ENCODE measurements at regions of chr1 and their contacts with region 1.

Region 1: DNA sequence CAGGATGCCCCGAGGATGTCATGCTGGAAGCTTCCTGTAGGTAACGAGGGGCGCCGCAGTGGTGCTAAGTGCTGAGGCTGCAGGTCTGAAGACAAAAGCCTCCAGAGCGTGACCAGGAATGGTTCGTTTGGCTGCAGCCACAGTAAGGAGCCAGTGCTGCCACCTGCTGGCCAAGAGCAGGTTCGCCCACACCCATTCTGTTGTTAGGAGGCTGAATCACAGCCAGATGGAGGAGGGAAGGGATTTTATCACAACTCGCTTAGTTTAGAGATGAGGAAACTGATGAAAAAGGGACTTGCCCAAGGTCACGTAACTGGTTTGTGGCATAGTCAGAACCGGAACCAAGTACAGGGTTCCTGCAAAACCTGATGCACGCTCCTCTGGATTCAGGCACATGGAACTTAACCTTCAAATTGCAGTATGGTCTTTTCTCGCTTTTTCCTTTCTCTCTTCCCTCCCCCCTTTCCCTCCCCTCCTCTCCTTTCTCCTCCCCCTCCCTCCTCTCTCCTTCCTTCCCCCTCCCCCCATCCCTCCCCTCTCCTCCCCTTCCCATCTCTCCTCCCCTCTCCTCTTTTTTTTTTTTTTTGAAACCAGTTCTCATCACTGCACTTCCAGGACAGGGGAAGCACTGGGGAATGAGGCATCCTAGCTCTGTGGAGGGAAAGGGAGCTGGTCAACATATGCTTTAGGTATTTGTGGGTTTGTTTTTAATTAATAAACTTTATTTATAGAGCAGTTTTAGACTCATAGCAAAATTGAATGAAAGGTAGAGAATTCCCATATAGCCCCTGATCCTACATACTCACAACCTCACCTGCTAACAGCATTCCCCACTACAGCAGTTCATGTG is 81.8 kb downstream of the MPZL1 start:
- DNase-seq: peak; percentile 95
- ATAC-seq: peak; percentile 89
- H3K4me3 ChIP-seq: no peak overlapping the region
- H3K27ac ChIP-seq: no peak overlapping the region
- H3K4me1 ChIP-seq: peaks cover 9% of the 10 kb centered on the region
- H3K27me3 ChIP-seq: no peaks in the 10 kb centered on the region
- CTCF ChIP-seq: peak; percentile 98
- POLR2A ChIP-seq: no peak
- RAD21 ChIP-seq: peak; percentile 89

Region 2: GRCh38 chr1:167553136-167554027 is 250.2 kb before region 1 on chr1 and contains the start of gene CREG1:
- CTCF ChIA-PET with region 1: no interaction called
- POLR2A ChIA-PET with region 1: no interaction called
- dilution Hi-C with region 1: no loop called
- in situ Hi-C with region 1: no loop called
- intact Hi-C with region 1: loop called (anchors 5 kb)
- DNase-seq: peak; percentile 78
- ATAC-seq: peak; percentile 100
- H3K4me3 ChIP-seq: peak within 1 kb of the TSS; percentile 80
- H3K27ac ChIP-seq: no peak within 1 kb of the TSS
- H3K4me1 ChIP-seq: peaks cover 4% of the 10 kb centered on the region; the same call in 1 of the 2 replicates
- H3K27me3 ChIP-seq: peaks cover 3% of the 10 kb centered on the region
- CTCF ChIP-seq: no peak
- POLR2A ChIP-seq: no peak
- RAD21 ChIP-seq: no peak
- total RNA-seq, gene CREG1: 2.9 and 3.3 TPM in 2 replicates

Region 3: DNA sequence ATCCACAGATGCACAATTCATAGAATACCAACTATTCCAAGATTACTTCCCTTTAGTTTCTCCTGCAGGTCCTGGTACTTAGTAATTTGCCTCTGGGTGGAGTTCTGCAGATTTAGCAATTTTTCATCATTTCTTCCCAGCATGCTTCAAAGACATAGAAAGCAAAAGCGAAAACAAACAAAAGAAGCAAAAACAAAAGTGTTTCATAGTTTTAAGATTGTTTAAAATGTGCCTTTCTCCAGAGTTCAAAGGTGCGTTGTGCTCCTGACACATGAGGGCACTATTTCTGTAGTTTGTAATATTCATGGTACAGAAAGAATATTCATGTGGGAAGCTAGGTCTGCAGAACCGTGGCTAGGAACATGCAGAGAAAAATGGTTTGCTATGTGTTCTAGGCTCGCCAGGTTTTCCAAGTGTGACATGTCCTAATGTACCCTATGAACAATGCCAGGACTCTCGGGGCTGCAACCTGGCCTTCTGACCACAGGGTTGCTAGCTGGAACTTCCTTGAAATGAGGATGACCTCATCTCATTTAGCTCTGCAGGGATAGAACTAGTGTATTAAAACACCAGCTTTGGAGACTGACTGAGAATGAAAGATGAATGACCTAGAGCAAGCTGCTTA is 203.5 kb before region 1 on chr1:
- CTCF ChIA-PET with region 1: no interaction called
- POLR2A ChIA-PET with region 1: no interaction called
- dilution Hi-C with region 1: no loop called
- in situ Hi-C with region 1: no loop called
- intact Hi-C with region 1: loop called (anchors 10 kb)
- DNase-seq: peak; percentile 22
- ATAC-seq: peak; percentile 73
- H3K4me3 ChIP-seq: no peak overlapping the region
- H3K27ac ChIP-seq: no peak overlapping the region
- H3K4me1 ChIP-seq: no peaks in the 10 kb centered on the region
- H3K27me3 ChIP-seq: peaks cover 5% of the 10 kb centered on the region
- CTCF ChIP-seq: peak; percentile 38
- POLR2A ChIP-seq: no peak
- RAD21 ChIP-seq: peak; percentile 43

Region 4: DNA sequence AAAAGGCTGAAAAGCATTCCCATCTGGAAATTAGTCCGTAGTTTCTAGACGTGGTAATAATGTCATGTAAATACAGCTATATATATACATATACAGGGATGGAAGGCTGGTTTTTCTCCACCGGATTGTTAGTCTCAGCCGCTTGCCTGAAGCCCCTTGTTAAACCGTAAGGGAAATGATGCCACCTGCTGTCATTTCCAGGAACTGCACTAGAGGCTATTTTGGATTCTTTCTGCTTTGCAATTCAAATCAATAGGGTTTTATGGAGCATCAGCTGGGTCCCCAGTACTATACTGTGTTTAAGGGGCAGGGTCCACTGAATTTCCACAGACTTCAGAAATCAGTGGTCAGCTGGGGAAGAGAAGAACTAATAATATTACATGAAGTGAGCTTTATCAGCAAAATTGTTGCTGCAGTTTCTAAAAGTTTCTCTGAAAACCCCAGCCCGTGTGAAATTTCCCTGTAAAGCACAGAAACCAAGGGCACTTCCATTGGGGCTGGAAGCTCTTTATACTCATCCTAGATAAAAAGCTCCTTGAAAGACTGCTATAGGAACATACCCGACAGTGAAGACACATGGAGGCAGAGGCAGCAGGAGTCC is 115.6 kb before region 1 on chr1:
- CTCF ChIA-PET with region 1: no interaction called
- POLR2A ChIA-PET with region 1: no interaction called
- dilution Hi-C with region 1: no loop called
- in situ Hi-C with region 1: no loop called
- intact Hi-C with region 1: no loop called
- DNase-seq: peak; percentile 78
- ATAC-seq: peak; percentile 82
- H3K4me3 ChIP-seq: no peak overlapping the region
- H3K27ac ChIP-seq: no peak overlapping the region
- H3K4me1 ChIP-seq: no peaks in the 10 kb centered on the region
- H3K27me3 ChIP-seq: peaks cover 24% of the 10 kb centered on the region
- CTCF ChIP-seq: peak; percentile 89
- POLR2A ChIP-seq: no peak
- RAD21 ChIP-seq: peak; percentile 82

Region 5: GRCh38 chr1:167904652-167905130 is 101.1 kb after region 1 on chr1:
- CTCF ChIA-PET with region 1: no interaction called
- POLR2A ChIA-PET with region 1: no interaction called
- dilution Hi-C with region 1: no loop called
- in situ Hi-C with region 1: no loop called
- intact Hi-C with region 1: loop called (anchors 5 kb)
- DNase-seq: peak; percentile 93
- ATAC-seq: peak; percentile 94
- H3K4me3 ChIP-seq: no peak overlapping the region
- H3K27ac ChIP-seq: peak overlapping the region; percentile 36; the same call in 1 of the 2 replicates
- H3K4me1 ChIP-seq: peaks cover 11% of the 10 kb centered on the region
- H3K27me3 ChIP-seq: no peaks in the 10 kb centered on the region
- CTCF ChIP-seq: 0 out of 2 replicates have a peak, but pooled peaks have one; percentile 21
- POLR2A ChIP-seq: no peak
- RAD21 ChIP-seq: peak; percentile 41

Measured in IMR-90 (cell line).